OCI-LY7 (cell line): ENCODE measurements at regions of chr13 and their contacts with region 1.

Region 1: GRCh38 chr13:20495082-20496023 is 30.3 kb downstream of the CRYL1 start:
- DNase-seq: peak; percentile 69
- H3K4me3 ChIP-seq: no peak overlapping the region
- H3K27ac ChIP-seq: no peak overlapping the region
- H3K4me1 ChIP-seq: no peaks in the 10 kb centered on the region
- CTCF ChIP-seq: peak; percentile 98

Region 2: DNA sequence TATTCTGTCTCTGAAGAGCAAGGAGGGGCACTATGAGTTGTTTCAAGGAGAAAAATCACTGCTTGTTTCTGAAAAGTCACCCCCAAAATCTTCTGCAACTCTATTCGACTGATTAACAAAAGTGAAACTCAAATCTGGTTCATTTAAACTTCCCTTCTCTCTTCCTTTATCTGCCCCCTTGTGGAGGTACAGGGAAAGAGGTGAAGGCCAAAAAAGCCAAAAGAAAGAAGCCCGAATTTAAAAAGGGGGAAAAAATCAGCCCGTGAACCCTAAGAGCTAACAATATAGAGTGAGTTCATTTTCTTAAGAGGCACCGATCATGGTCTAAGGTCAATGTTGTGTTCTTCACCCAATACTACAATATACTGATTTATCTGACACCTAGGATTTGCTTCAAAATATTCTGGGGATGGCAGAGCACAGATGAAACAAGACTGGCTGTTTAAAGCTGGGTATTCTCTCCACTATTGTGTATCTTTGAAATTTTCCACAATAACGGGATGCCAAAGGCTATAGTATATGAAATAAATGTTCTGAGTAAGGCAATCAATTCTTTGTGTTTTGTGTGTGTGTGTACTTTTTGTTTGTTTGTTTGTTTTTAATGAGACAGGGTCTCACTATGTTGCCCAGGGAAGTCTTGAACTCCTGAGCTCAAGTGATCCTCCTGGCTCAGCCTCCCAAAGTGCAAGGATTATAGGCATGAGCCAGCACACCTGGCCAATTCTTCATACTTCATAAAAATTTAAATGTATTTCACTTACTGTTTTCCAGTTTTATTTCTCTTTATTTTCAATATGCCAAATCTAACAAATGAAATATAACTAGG is 333.4 kb after region 1 on chr13:
- CTCF ChIA-PET with region 1: no interaction called
- POLR2A ChIA-PET with region 1: no interaction called
- intact Hi-C with region 1: loop called (anchors 1 kb)
- DNase-seq: peak; percentile 68
- H3K4me3 ChIP-seq: no peak overlapping the region
- H3K27ac ChIP-seq: no peak overlapping the region
- H3K4me1 ChIP-seq: peaks cover 28% of the 10 kb centered on the region
- CTCF ChIP-seq: peak; percentile 87

Region 3: DNA sequence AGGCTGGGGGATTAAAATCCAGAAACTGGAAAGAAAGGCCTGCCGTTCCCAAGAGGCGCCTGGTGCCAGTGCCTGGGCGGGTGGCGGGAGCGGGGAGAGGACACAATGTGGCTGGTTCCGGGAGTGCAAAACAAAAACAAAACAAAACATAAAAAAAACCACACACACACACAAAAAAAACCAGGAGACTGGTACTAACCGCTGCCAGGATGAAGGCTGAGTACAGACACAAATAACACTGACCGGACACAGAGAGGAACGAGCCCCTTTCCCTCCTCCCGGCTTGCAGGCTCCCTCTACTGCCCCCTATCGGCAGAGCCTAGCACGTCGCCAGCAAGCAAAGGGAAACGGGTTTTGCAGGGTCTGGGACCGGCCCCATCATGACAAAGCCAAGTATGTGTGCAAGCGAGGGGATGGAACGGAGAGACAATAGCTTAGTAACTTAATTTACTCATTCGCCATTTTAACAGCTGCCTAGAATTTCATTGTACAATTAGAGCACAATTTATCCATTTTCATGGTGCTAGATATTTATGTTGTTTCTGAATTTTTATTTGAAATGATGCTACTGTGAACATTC is 981.6 kb after region 1 on chr13:
- CTCF ChIA-PET with region 1: no interaction called
- POLR2A ChIA-PET with region 1: no interaction called
- intact Hi-C with region 1: loop called (anchors 5 kb)
- DNase-seq: peak; percentile 81
- H3K4me3 ChIP-seq: peak overlapping the region; percentile 55
- H3K27ac ChIP-seq: no peak overlapping the region
- H3K4me1 ChIP-seq: no peaks in the 10 kb centered on the region
- CTCF ChIP-seq: peak; percentile 95